Activated CD4-positive, alpha-beta memory T cell treated with anti-CD3 and anti-CD28 coated beads, Interleukin-2, amount 10 ng/mL, durations not matched to agents 7 days and 5 days (primary cell): ENCODE measurements at regions of chr11 and their contacts with region 1.

Region 1: GRCh38 chr11:6489306-6489705 is 7.8 kb upstream of the DNHD1 start:
- DNase-seq: no peak
- H3K4me3 Mint-ChIP-seq: no peak overlapping the region
- H3K27ac Mint-ChIP-seq: no peak overlapping the region
- H3K4me1 Mint-ChIP-seq: no peaks in the 10 kb centered on the region
- H3K27me3 Mint-ChIP-seq: no peaks in the 10 kb centered on the region

Region 2: GRCh38 chr11:6397636-6398035 is 91.7 kb before region 1 on chr11:
- CTCF ChIA-PET with region 1: no interaction called
- POLR2A ChIA-PET with region 1: no interaction called
- DNase-seq: no peak
- H3K4me3 Mint-ChIP-seq: no peak overlapping the region
- H3K27ac Mint-ChIP-seq: no peak overlapping the region
- H3K4me1 Mint-ChIP-seq: peaks cover 32% of the 10 kb centered on the region
- H3K27me3 Mint-ChIP-seq: no peaks in the 10 kb centered on the region

Region 3: GRCh38 chr11:6505577-6506240 is 16.4 kb after region 1 on chr11:
- CTCF ChIA-PET with region 1: interaction called, 28 read pairs
- POLR2A ChIA-PET with region 1: interaction called, 3 read pairs
- DNase-seq: no peak
- H3K4me3 Mint-ChIP-seq: no peak overlapping the region
- H3K27ac Mint-ChIP-seq: no peak overlapping the region
- H3K4me1 Mint-ChIP-seq: peaks cover 4% of the 10 kb centered on the region
- H3K27me3 Mint-ChIP-seq: no peaks in the 10 kb centered on the region